Ovary (tissue), 10 donors: ENCODE measurements at regions of chr1 and their contacts with region 1.

Region 1: DNA sequence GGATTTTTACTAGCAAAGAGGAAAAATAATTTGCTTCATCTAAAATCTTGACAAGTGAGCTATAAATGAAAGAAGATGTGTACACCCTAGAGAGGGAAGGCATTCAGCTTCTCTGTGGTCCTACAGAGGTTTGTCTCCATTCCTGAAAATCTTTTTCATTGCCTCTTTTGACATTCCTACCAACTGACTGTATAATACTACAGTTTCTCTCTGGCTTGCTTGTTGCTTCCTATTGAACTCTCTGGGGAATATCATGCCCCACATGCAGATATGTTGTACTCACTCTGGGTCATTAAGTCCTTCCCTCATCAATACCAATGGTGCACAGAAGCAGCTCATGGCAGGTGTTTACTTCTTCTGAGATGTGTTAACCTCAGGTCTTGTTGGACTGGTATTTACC is 371.2 kb upstream of the PLXNA2 start:
- DNase-seq: no peak
- H3K4me3 ChIP-seq: no peak overlapping the region
- H3K27ac ChIP-seq: no peak overlapping the region
- H3K4me1 ChIP-seq: no peaks in the 10 kb centered on the region
- H3K27me3 ChIP-seq: no peaks in the 10 kb centered on the region
- CTCF ChIP-seq: no peak
- EP300 ChIP-seq: no peak
- POLR2A ChIP-seq: no peak

Region 2: DNA sequence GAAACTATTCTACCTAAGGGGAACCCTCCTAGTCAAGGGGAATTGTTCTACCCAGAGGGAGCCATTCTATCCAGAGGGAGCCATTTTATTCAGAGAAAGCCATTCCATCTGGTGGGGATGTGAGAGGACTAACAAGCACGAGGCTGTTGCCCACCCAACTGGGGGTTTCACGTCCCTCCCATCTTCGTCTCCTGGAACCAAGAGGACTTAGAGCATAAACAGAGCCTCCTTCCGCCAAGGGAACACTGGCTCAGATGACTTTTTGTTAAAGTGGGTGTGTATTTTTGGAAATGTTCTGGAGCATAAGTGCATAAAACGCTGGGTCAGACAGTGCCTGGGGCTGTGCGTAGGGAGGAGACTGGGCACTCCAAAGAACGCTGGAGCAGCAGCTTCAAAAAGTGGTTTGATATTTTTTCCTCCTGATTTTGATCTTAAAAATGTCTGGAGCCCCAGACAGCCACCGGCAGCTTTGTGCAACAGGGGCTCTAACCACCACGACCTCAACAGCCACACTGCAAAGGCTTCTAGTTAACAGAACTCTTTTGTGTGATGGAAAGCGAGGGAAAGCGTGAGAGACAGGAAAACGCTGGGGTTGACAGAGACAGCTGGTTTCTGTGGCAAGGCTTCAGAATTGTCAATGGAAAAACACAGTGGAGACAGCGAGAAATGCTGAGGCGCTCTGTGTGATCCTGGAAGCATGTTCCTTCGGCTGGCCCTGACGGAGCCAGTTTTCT is 604.6 kb after region 1 on chr1:
- intact Hi-C with region 1: no loop called
- DNase-seq: no peak
- H3K4me3 ChIP-seq: no peak overlapping the region
- H3K27ac ChIP-seq: no peak overlapping the region
- H3K4me1 ChIP-seq: no peaks in the 10 kb centered on the region
- H3K27me3 ChIP-seq: no peaks in the 10 kb centered on the region
- CTCF ChIP-seq: no peak
- EP300 ChIP-seq: no peak
- POLR2A ChIP-seq: no peak

Region 3: DNA sequence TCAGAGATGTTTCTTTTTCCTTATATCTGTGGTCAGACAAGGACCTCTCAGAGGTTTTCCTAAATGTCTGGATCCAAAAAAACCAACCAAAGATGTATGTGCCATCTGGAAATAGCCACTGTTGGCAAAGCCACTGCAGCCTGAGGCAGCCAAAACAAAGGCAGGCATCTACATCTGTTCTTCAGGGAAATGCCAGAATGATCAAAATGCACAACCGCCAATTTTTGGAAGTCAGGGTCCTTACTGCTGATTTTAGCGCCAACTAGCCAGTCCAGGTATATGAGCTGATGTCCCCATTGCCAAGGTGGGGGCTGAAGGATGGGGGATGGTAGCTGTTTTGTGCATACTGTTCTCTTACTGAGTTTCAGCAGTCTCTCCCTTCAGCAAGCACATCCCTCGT is 1368.6 kb after region 1 on chr1:
- intact Hi-C with region 1: loop called in 1 of 4 experiments (anchors 10 kb)
- DNase-seq: no peak
- H3K4me3 ChIP-seq: no peak overlapping the region
- H3K27ac ChIP-seq: no peak overlapping the region
- H3K4me1 ChIP-seq: no peaks in the 10 kb centered on the region
- H3K27me3 ChIP-seq: no peaks in the 10 kb centered on the region
- CTCF ChIP-seq: no peak
- EP300 ChIP-seq: no peak
- POLR2A ChIP-seq: no peak